Activated CD8-positive, alpha-beta T cell treated with anti-CD3 and anti-CD28 coated beads for 36 hours (primary cell): ENCODE measurements at regions of chr5 and their contacts with region 1.

Region 1: DNA sequence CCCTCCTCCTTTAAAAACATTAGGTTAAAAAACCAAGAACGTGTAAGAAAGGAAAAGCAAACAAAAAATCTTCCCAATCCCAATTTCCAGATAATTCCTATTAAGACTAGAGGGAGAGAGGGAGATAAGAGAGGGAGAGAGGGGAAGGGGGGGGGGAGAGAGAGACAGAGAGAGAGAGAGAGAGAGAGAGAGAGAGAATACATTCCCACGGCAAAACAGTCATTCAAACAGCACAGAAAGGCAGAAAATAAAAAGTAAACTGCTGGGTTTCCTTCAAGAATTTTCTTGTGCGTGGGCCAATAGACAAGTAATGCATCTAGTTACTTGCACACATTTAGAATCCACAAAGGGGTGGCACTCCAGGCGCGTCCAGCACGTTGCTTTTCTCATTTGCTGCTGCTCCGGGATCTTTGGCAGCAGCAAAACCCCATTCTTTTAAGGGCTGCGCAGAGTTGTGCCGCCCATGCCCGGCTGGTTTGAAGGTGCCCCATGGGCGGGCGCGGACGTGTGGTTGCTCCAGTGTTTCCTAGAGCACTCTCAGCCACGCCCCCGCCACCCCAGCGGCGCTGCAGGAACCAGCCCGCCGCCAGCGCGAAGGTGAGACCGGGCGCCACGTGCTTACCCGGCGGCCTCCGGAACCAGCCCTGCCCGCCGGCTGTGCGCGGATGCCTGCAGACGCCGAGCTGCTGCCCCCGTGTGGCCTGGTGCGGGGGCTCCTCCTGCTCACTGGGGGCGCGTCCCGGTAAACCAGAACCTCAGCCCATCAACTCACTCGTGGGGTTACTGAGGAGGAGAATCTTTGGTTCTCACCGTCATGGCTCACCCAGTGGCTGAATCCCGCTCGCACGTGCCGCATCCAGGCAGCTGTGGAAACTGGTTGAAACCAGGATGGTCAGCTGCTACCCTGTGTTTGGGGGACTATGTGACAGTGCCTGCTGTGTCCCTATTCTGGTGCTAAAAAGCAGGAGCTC is 44.6 kb downstream of the STC2 start:
- DNase-seq: peak; percentile 85
- ATAC-seq: peak; percentile 92
- H3K4me3 Mint-ChIP-seq: peak overlapping the region; percentile 41
- H3K27ac Mint-ChIP-seq: no peak overlapping the region
- H3K4me1 Mint-ChIP-seq: peaks cover 15% of the 10 kb centered on the region
- H3K27me3 Mint-ChIP-seq: peaks cover 47% of the 10 kb centered on the region
- CTCF ChIP-seq: peak; percentile 68

Region 2: GRCh38 chr5:172973127-172973916 is 310.3 kb before region 1 on chr5:
- CTCF ChIA-PET with region 1: no interaction called
- POLR2A ChIA-PET with region 1: no interaction called
- intact Hi-C with region 1: loop called (anchors 10 kb)
- DNase-seq: no peak
- ATAC-seq: no peak
- H3K4me3 Mint-ChIP-seq: no peak overlapping the region
- H3K27ac Mint-ChIP-seq: no peak overlapping the region
- H3K4me1 Mint-ChIP-seq: peaks cover 1% of the 10 kb centered on the region
- H3K27me3 Mint-ChIP-seq: no peaks in the 10 kb centered on the region
- CTCF ChIP-seq: no peak